Lower leg skin (tissue), 4 donors: ENCODE measurements at regions of chr11 and their contacts with region 1.

Region 1: GRCh38 chr11:71383461-71383860 is 64.7 kb downstream of the DHCR7 start:
- DNase-seq: no peak
- H3K4me3 ChIP-seq: no peak overlapping the region
- CTCF ChIP-seq: no peak
- POLR2A ChIP-seq: no peak

Region 2: GRCh38 chr11:70220920-70221319 is 1162.5 kb before region 1 on chr11:
- intact Hi-C with region 1: loop called (anchors 5 kb)
- DNase-seq: no peak
- H3K4me3 ChIP-seq: no peak overlapping the region
- CTCF ChIP-seq: no peak
- POLR2A ChIP-seq: no peak